Naive thymus-derived CD4-positive, alpha-beta T cell (primary cell): ENCODE measurements at regions of chr11 and their contacts with region 1.

Region 1: GRCh38 chr11:96342961-96343711 is at the start of gene MAML2:
- DNase-seq: peak; percentile 67 to 91 (median 85)
- ATAC-seq: peak; percentile 93
- H3K4me3 ChIP-seq: peak within 1 kb of the TSS; percentile 95
- H3K4me3 Mint-ChIP-seq: peak within 1 kb of the TSS; percentile 95 to 99 (median 98)
- H3K27ac ChIP-seq: peak within 1 kb of the TSS; percentile 87
- H3K27ac Mint-ChIP-seq: peak within 1 kb of the TSS; percentile 93 to 98 (median 96)
- H3K4me1 ChIP-seq: peaks cover 11 to 31% of the 10 kb centered on the region in 2 donors
- H3K4me1 Mint-ChIP-seq: peaks cover 13 to 41% (median 19%) of the 10 kb centered on the region in 7 donors
- H3K27me3 ChIP-seq: no peaks in the 10 kb centered on the region
- H3K27me3 Mint-ChIP-seq: no peaks in the 10 kb centered on the region
- total RNA-seq, gene MAML2: 15.6 to 81.3 (median 68.2) TPM

Region 2: DNA sequence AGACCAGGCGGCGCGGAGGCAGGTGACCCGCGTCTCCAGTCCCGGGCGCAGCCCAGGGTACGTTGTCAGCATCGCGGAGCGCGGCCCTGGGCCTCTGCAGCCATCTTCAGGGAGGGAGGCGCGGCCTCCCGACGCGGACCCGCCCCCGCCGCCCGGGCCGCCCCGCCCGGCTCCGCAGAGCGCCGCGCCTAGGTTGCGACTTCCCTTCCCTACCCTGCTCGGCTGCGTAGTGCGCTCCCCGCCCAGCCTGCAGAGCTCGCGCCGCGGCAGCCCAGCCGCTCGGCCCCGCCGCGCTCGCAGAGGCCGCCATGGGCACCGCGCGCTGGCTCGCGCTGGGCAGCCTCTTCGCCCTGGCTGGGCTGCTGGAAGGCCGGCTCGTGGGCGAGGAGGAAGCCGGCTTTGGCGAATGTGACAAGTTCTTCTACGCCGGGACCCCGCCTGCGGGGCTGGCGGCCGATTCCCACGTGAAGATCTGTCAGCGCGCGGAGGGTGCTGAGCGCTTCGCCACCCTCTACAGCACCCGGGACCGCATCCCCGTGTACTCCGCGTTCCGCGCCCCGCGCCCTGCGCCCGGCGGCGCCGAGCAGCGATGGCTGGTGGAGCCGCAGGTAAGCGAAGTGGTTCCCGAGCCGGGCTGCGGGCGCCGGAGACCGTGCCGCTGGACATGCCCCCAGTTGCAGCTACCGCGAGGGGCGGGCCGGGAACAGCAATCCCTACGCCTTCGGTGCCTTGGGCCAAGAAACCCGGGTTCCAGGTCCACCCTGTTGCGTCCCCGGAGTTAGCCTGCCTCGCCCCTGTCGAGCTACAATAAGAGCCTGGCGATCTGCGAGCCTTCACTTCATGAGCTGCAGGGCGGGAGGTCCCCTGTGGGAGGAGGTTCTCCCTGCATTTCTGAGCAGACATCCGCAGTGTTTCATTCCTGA is 1253.3 kb before region 1 on chr11 and contains the start of gene ENDOD1:
- CTCF ChIA-PET with region 1: no interaction called
- POLR2A ChIA-PET with region 1: no interaction called
- intact Hi-C with region 1: loop called in 1 of 2 experiments (anchors 2 kb)
- DNase-seq: peak; percentile 81 to 89 (median 87)
- ATAC-seq: peak; percentile 98
- H3K4me3 ChIP-seq: peak within 1 kb of the TSS; percentile 79
- H3K4me3 Mint-ChIP-seq: peak within 1 kb of the TSS; percentile 86 to 95 (median 92)
- H3K27ac ChIP-seq: peak within 1 kb of the TSS; percentile 87
- H3K27ac Mint-ChIP-seq: peak within 1 kb of the TSS; percentile 96 to 99 (median 98)
- H3K4me1 ChIP-seq: peaks cover 16 to 31% of the 10 kb centered on the region in 2 donors
- H3K4me1 Mint-ChIP-seq: peaks cover 24 to 61% (median 49%) of the 10 kb centered on the region in 7 donors
- H3K27me3 ChIP-seq: no peaks in the 10 kb centered on the region
- H3K27me3 Mint-ChIP-seq: no peaks in the 10 kb centered on the region
- total RNA-seq, gene ENDOD1: 4.7 to 23.2 (median 8.6) TPM

Region 3: GRCh38 chr11:95764267-95764898 is 578.8 kb before region 1 on chr11:
- CTCF ChIA-PET with region 1: no interaction called
- POLR2A ChIA-PET with region 1: no interaction called
- intact Hi-C with region 1: no loop called
- DNase-seq: peak in 7 of 9 donors; percentile 43 to 73 (median 68)
- ATAC-seq: peak; percentile 95
- H3K4me3 ChIP-seq: no peak overlapping the region
- H3K4me3 Mint-ChIP-seq: no peak overlapping the region
- H3K27ac ChIP-seq: no peak overlapping the region
- H3K27ac Mint-ChIP-seq: no peak overlapping the region
- H3K4me1 ChIP-seq: no peaks in the 10 kb centered on the region
- H3K4me1 Mint-ChIP-seq: peaks cover 0 to 9% (median 0%) of the 10 kb centered on the region in 7 donors
- H3K27me3 ChIP-seq: no peaks in the 10 kb centered on the region
- H3K27me3 Mint-ChIP-seq: peaks cover 0 to 19% (median 0%) of the 10 kb centered on the region in 5 donors

Region 4: GRCh38 chr11:95849087-95849825 is 493.9 kb before region 1 on chr11:
- CTCF ChIA-PET with region 1: interaction called, 18 read pairs
- POLR2A ChIA-PET with region 1: interaction called, 4 read pairs
- intact Hi-C with region 1: loop called in 1 of 2 experiments (anchors 1 kb)
- DNase-seq: peak in 6 of 9 donors; percentile 2 to 39 (median 19)
- ATAC-seq: peak; percentile 64
- H3K4me3 ChIP-seq: no peak overlapping the region
- H3K4me3 Mint-ChIP-seq: no peak overlapping the region
- H3K27ac ChIP-seq: no peak overlapping the region
- H3K27ac Mint-ChIP-seq: peak overlapping the region in 2 of 9 donors; percentile 11 to 49
- H3K4me1 ChIP-seq: no peaks in the 10 kb centered on the region
- H3K4me1 Mint-ChIP-seq: no peaks in the 10 kb centered on the region
- H3K27me3 ChIP-seq: no peaks in the 10 kb centered on the region
- H3K27me3 Mint-ChIP-seq: no peaks in the 10 kb centered on the region

Region 5: GRCh38 chr11:96062134-96062533 is 281.0 kb before region 1 on chr11:
- CTCF ChIA-PET with region 1: interaction called, 111 read pairs
- POLR2A ChIA-PET with region 1: interaction called, 24 read pairs
- intact Hi-C with region 1: no loop called
- DNase-seq: peak in 7 of 9 donors; percentile 18 to 68 (median 43)
- ATAC-seq: peak; percentile 91
- H3K4me3 ChIP-seq: no peak overlapping the region
- H3K4me3 Mint-ChIP-seq: peak overlapping the region in 6 of 10 donors; percentile 15 to 47 (median 28)
- H3K27ac ChIP-seq: peak overlapping the region; percentile 38
- H3K27ac Mint-ChIP-seq: peak overlapping the region; percentile 37 to 79 (median 53)
- H3K4me1 ChIP-seq: peaks cover 0 to 21% of the 10 kb centered on the region in 2 donors
- H3K4me1 Mint-ChIP-seq: peaks cover 30 to 99% (median 86%) of the 10 kb centered on the region in 7 donors
- H3K27me3 ChIP-seq: no peaks in the 10 kb centered on the region
- H3K27me3 Mint-ChIP-seq: no peaks in the 10 kb centered on the region

Region 6: DNA sequence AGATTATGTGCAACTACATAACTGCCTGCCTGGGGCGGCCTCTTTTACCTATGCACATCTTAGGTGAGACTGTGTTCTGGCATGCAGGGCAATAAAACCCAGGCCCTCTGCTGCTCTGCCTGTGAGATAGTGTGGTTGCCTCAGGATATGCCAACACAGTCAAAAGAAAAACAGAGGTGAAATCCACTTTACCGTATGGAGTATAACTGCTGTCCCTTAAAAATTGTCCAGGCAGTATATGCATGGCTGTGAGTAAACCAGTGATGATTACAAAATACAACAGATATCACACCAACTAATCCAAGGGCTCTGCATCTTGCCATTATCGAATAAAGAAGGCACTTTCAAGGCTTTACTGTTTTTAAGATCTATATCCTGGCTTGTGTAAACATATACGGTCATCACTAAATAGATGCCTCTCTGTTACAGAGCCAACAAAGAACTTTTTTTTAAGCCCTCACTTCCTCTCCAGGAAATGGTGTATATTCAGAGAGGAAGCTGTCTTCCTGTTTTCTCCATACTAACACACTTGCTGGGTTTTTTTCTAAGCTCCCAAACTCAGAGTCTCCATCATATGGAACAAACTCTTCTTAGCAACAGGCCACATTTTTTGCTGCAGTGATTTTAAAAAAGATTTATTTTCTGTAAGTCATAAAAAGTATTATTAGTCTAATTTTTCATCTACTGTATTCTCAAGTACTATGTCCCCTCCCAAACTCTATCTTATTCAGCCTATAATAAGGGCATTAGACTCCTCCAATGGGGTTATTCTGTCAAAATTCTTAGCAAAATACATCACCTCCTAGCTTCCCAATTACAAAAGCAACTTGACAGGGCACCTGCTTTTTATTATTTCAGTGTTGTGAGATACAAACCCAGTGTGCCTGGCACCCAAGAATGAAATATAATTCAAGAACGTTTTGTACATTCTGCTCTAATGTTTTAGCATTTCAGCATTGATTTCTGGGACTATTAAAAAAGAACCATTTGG is 135.4 kb before region 1 on chr11:
- CTCF ChIA-PET with region 1: interaction called, 6 read pairs
- POLR2A ChIA-PET with region 1: interaction called, 9 read pairs
- intact Hi-C with region 1: loop called (anchors 1 kb)
- DNase-seq: peak in 7 of 9 donors; percentile 43 to 73 (median 57)
- ATAC-seq: peak; percentile 70
- H3K4me3 ChIP-seq: peak overlapping the region; percentile 9
- H3K4me3 Mint-ChIP-seq: peak overlapping the region; percentile 51 to 84 (median 74)
- H3K27ac ChIP-seq: peak overlapping the region; percentile 62
- H3K27ac Mint-ChIP-seq: peak overlapping the region; percentile 86 to 99 (median 95)
- H3K4me1 ChIP-seq: peaks cover 70 to 93% of the 10 kb centered on the region in 2 donors
- H3K4me1 Mint-ChIP-seq: peaks cover 45 to 96% (median 92%) of the 10 kb centered on the region in 7 donors
- H3K27me3 ChIP-seq: no peaks in the 10 kb centered on the region
- H3K27me3 Mint-ChIP-seq: no peaks in the 10 kb centered on the region

Region 7: GRCh38 chr11:96254087-96254486 is 89.0 kb before region 1 on chr11:
- CTCF ChIA-PET with region 1: interaction called, 21 read pairs
- POLR2A ChIA-PET with region 1: interaction called, 14 read pairs
- intact Hi-C with region 1: loop called (anchors 1 kb)
- DNase-seq: peak in 7 of 9 donors; percentile 32 to 64 (median 43)
- ATAC-seq: peak; percentile 32
- H3K4me3 ChIP-seq: peak overlapping the region; percentile 40
- H3K4me3 Mint-ChIP-seq: peak overlapping the region; percentile 74 to 87 (median 81)
- H3K27ac ChIP-seq: peak overlapping the region; percentile 77
- H3K27ac Mint-ChIP-seq: peak overlapping the region; percentile 87 to 100 (median 96)
- H3K4me1 ChIP-seq: peaks cover 58 to 78% of the 10 kb centered on the region in 2 donors
- H3K4me1 Mint-ChIP-seq: peaks cover 62 to 99% (median 94%) of the 10 kb centered on the region in 7 donors
- H3K27me3 ChIP-seq: no peaks in the 10 kb centered on the region
- H3K27me3 Mint-ChIP-seq: no peaks in the 10 kb centered on the region

Region 8: GRCh38 chr11:96357794-96358193 is 14.7 kb after region 1 on chr11:
- CTCF ChIA-PET with region 1: interaction called, 10 read pairs
- POLR2A ChIA-PET with region 1: no interaction called
- intact Hi-C with region 1: no loop called
- DNase-seq: no peak
- ATAC-seq: no peak
- H3K4me3 ChIP-seq: no peak overlapping the region
- H3K4me3 Mint-ChIP-seq: peak overlapping the region in 1 of 10 donors; percentile 1
- H3K27ac ChIP-seq: no peak overlapping the region
- H3K27ac Mint-ChIP-seq: peak overlapping the region in 2 of 9 donors; percentile 12 to 22
- H3K4me1 ChIP-seq: no peaks in the 10 kb centered on the region
- H3K4me1 Mint-ChIP-seq: peaks cover 0 to 29% (median 0%) of the 10 kb centered on the region in 7 donors
- H3K27me3 ChIP-seq: no peaks in the 10 kb centered on the region
- H3K27me3 Mint-ChIP-seq: no peaks in the 10 kb centered on the region